ENCODE measurements at regions of chr1 and their contacts with region 1.

Region 1: GRCh38 chr1:173824331-173825081 is at the starts of genes CENPL and DARS2:
- DNase-seq: peak; percentile 96
- ATAC-seq: peak; percentile 85
- H3K4me3 Mint-ChIP-seq: peak within 1 kb of the TSS; percentile 98
- H3K27ac Mint-ChIP-seq: peak within 1 kb of the TSS; percentile 98
- H3K4me1 Mint-ChIP-seq: peaks cover 63% of the 10 kb centered on the region
- H3K27me3 Mint-ChIP-seq: no peaks in the 10 kb centered on the region
- total RNA-seq, gene CENPL: 35.4 to 42.0 TPM
- total RNA-seq, gene DARS2: 28.7 to 32.3 TPM

Region 2: DNA sequence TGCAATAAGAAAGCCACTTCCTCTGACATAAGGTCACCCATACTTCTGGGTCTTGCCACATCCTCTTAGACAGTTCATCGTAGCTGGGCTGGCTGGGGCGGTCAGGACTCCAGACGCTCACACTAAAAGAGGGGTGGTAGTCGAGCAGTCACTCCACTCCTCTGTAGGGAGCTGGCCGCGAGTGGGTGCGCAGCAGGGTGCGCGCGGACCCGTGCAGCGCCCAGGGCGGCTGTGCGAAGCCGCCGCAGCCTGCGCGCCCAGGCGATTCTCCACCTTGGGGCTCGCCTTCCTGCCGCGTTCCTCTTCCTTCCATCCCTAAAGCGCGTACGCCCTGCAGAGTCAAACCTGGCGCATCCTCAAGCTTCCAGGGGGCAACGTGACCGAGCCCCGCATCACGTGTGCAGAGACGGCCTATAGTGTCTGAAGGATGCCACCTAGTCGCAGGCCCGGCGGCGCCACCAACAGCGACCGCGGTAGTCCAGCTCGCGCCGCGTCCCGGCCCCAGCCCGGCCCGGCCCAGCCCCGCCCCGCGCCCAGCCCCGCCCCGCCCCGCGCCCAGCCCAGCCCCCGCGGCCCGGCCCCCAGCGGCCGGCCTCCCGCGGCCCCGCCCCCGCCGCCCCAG is 347.7 kb before region 1 on chr1:
- CTCF ChIA-PET with region 1: interaction called, 18 read pairs
- DNase-seq: peak; percentile 88
- ATAC-seq: peak; percentile 85
- H3K4me3 Mint-ChIP-seq: peak overlapping the region; percentile 87
- H3K27ac Mint-ChIP-seq: peak overlapping the region; percentile 94
- H3K4me1 Mint-ChIP-seq: peaks cover 51% of the 10 kb centered on the region
- H3K27me3 Mint-ChIP-seq: no peaks in the 10 kb centered on the region

Region 3: GRCh38 chr1:173714759-173715537 is 109.6 kb before region 1 on chr1 and contains the start of gene KLHL20:
- CTCF ChIA-PET with region 1: interaction called, 11 read pairs
- DNase-seq: peak; percentile 93
- ATAC-seq: peak; percentile 99
- H3K4me3 Mint-ChIP-seq: peak within 1 kb of the TSS; percentile 88
- H3K27ac Mint-ChIP-seq: peak within 1 kb of the TSS; percentile 90
- H3K4me1 Mint-ChIP-seq: peaks cover 25% of the 10 kb centered on the region
- H3K27me3 Mint-ChIP-seq: peaks cover 19% of the 10 kb centered on the region
- total RNA-seq, gene KLHL20: 18.8 to 25.0 TPM

Region 4: GRCh38 chr1:173779936-173780335 is 44.6 kb before region 1 on chr1:
- CTCF ChIA-PET with region 1: no interaction called
- DNase-seq: no peak
- ATAC-seq: no peak
- H3K4me3 Mint-ChIP-seq: no peak overlapping the region
- H3K27ac Mint-ChIP-seq: no peak overlapping the region
- H3K4me1 Mint-ChIP-seq: peaks cover 2% of the 10 kb centered on the region
- H3K27me3 Mint-ChIP-seq: no peaks in the 10 kb centered on the region

Measured in activated CD8-positive, alpha-beta memory T cell treated with anti-CD3 and anti-CD28 coated beads, Interleukin-2, amount 10 ng/mL, durations not matched to agents 7 days and 5 days (primary cell).